ENCODE measurements at regions of chr19 and their contacts with region 1.

Region 1: GRCh38 chr19:45862564-45863334 is at the start of gene SYMPK:
- DNase-seq: peak; percentile 99
- H3K4me3 ChIP-seq: peak within 1 kb of the TSS; percentile 77 to 96
- H3K27ac ChIP-seq: peak within 1 kb of the TSS; percentile 89 to 93
- H3K4me1 ChIP-seq: peaks cover 0 to 6% of the 10 kb centered on the region in 2 experiments; a peak in 2 of 4 replicates
- H3K27me3 ChIP-seq: peaks cover 19% of the 10 kb centered on the region; the same call in 1 of the 2 replicates
- CTCF ChIP-seq: no peak
- EP300 ChIP-seq: no peak
- RAD21 ChIP-seq: no peak
- polyA plus RNA-seq, gene SYMPK: 76.3 and 92.7 TPM in 2 replicates

Region 2: DNA sequence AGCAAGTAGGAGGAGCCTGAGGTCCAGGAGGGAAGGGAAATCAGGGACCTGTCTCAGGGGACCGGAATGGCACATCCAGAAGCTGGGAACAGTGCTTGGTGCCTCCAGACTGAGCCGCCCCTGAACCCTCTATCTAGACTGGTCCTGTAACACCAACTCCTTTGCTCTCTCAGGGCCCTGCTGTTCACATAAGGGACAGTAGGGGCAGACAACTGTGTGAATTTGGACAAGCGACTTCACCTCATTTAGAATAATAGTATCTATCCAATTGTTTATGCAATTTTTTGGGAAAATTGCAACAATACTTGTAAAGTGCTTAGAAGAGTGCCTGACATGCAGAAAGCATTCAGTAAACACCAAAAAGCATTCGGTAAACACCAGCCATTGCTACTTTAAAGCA is 13.8 kb before region 1 on chr19:
- CTCF ChIA-PET with region 1: interaction called, 21 read pairs
- POLR2A ChIA-PET with region 1: interaction called, 5 read pairs
- DNase-seq: no peak
- H3K4me3 ChIP-seq: no peak overlapping the region
- H3K27ac ChIP-seq: no peak overlapping the region
- H3K4me1 ChIP-seq: no peaks in the 10 kb centered on the region
- H3K27me3 ChIP-seq: no peaks in the 10 kb centered on the region
- CTCF ChIP-seq: peak; percentile 41
- EP300 ChIP-seq: no peak
- RAD21 ChIP-seq: no peak

Region 3: DNA sequence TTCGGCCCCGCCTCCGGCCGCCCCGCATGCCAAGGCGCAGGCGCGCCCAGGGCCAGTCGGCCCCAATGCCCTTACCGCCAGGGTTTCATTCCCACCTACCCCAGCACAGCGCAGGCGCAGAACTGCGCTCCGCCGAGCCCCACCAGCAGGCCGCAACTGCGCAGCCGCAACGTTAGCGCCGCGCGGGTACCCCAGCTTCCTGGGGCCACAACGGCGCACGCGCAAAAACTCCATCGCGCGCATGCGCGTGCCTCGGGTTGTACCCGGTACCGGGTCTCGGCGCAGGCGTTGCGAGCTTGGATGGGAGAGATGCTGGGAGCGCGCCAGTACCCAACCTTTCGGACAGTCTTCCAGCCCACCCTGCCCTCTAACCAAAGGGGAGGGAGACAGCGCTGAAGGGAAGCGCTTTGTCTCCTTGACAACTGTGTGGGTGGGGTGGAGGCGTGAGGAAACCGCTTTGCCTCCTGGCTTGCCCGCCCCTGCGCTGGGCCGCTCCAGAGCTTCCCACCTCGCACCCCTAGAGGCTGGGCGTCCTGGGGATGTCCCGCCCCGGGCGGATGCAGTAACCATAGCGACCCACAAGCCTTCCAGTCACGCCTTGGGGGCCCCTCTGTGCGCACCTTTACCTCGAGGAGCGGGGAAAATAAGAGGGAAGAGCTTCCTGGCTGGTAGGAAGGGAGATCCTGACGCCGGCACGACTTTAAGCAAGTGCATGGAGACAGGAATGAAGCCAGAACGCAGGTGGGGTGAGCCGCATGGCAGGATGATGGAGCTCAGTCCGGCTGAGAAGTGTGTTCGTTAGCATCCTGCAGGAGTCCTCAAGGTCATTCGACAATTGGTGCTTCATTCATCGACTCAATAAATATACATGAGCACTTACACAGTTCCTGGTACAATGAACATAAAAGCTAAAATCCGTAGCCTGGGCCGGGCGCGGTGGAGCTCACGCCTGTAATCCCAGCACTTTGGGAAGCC is 40.2 kb after region 1 on chr19:
- CTCF ChIA-PET with region 1: interaction called, 13 read pairs
- POLR2A ChIA-PET with region 1: no interaction called
- DNase-seq: peak; percentile 100
- H3K4me3 ChIP-seq: peak overlapping the region; percentile 60 to 82
- H3K27ac ChIP-seq: peak overlapping the region; percentile 80 to 91
- H3K4me1 ChIP-seq: peaks cover 0 to 8% of the 10 kb centered on the region in 2 experiments; a peak in 1 of 4 replicates
- H3K27me3 ChIP-seq: no peaks in the 10 kb centered on the region
- CTCF ChIP-seq: no peak
- EP300 ChIP-seq: no peak
- RAD21 ChIP-seq: no peak